ENCODE measurements at regions of chr12 and their contacts with region 1.

Region 1: DNA sequence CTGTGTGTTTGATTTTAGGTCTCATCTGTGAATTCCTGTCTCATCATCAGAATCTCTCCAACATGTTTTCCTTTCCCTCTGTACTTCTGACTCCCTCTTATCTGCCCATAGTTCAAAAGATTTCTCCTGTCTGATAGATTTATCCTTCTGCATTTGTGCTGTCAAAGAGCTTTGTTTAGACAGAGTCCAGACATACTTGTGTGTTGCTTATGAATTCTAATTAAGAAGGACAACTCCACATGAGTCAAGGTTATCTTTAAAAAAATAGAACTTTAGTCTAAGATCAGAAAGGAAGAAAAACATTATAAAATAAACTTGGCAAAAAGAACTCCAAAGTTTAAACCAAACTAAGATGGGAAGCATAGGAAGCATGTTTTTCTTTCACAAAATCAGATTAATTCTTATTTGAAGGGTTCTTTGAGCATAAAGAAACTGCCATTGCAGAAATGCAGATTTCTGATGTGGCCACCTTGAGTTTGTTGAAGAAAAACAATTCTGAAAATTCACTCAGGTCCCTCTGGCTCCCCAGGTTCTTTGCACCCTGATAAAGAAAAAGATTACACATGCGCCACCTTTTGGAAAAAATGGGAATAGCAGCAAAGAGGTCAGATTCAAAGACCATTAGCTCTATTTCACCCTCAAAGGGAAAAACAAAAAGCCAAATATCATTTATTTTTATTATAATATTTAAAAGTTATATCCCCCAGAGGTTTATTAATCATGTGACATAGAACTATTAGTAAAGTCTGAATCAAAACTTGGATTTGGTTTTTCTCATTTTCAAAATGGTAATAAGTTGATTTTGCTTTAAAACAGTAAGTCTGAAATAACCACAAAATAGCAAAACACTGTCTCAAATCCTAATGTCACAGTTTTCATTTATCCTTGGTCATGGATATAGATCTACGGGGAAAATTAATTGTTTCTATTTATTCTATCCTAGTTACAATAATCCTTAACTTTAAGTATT is 143.7 kb upstream of the DCN start:
- DNase-seq: no peak
- ATAC-seq: peak in 1 of 2 donors; percentile 71
- H3K4me3 ChIP-seq: no peak overlapping the region
- H3K27ac ChIP-seq: peak overlapping the region; percentile 32
- H3K4me1 ChIP-seq: no peaks in the 10 kb centered on the region
- H3K27me3 ChIP-seq: no peaks in the 10 kb centered on the region
- CTCF ChIP-seq: peak; percentile 80

Region 2: DNA sequence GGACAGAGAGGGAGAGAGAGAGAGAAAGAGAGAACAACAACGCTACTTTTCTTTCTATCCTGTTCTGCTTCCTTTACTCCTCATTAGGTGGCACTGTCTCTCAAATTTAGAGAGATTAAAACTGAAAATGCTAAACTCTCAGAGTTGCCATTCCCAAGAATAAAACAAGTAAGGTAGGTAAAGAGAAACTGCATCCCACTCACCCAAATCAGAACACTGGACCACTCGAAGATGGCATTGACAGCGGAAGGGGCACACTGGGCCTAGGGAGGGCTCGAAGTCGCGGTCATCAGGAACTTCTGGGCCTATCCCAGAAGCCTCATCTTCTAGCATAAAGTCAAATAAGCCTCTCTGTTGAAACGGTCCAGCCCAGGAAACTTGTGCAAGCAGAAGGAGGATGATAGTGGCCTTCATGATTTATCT is 148.2 kb before region 1 on chr12:
- intact Hi-C with region 1: loop called (anchors 10 kb)
- DNase-seq: no peak
- ATAC-seq: peak; percentile 30 to 78
- H3K4me3 ChIP-seq: peak overlapping the region; percentile 43
- H3K27ac ChIP-seq: peak overlapping the region; percentile 74
- H3K4me1 ChIP-seq: no peaks in the 10 kb centered on the region
- H3K27me3 ChIP-seq: no peaks in the 10 kb centered on the region
- CTCF ChIP-seq: peak; percentile 43

Region 3: DNA sequence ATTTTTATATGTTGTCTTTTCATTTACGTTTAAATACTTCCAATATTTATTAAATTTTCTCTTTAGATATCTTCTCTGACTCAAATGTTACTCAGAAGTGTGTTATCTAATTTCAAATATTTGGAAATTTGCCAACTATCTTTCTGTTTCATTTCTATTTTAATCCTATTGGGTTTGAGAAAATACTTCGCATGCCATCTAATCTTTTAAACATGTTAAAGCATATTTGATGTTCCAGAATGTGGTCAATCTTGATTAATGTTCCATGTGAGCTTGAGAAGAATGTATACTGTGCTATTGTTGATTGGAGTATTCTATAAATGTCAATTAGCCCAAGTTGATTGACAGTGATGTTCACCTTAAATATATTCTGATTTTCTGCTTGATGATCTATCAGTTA is 131.8 kb before region 1 on chr12:
- intact Hi-C with region 1: no loop called
- DNase-seq: no peak
- ATAC-seq: no peak
- H3K4me3 ChIP-seq: no peak overlapping the region
- H3K27ac ChIP-seq: no peak overlapping the region
- H3K4me1 ChIP-seq: no peaks in the 10 kb centered on the region
- H3K27me3 ChIP-seq: no peaks in the 10 kb centered on the region
- CTCF ChIP-seq: no peak

Region 4: GRCh38 chr12:91630596-91631293 is 304.4 kb after region 1 on chr12:
- intact Hi-C with region 1: no loop called
- DNase-seq: no peak
- ATAC-seq: no peak
- H3K4me3 ChIP-seq: no peak overlapping the region
- H3K27ac ChIP-seq: no peak overlapping the region
- H3K4me1 ChIP-seq: no peaks in the 10 kb centered on the region
- H3K27me3 ChIP-seq: no peaks in the 10 kb centered on the region
- CTCF ChIP-seq: no peak

Measured in lower lobe of right lung (tissue), 2 donors.